Endothelial cell of umbilical vein (primary cell): ENCODE measurements at regions of chr20 and their contacts with region 1.

Region 1: GRCh38 chr20:40915756-40916155 is 112.9 kb upstream of the TOP1 start:
- DNase-seq: no peak
- H3K4me3 ChIP-seq: no peak overlapping the region
- H3K27ac ChIP-seq: no peak overlapping the region
- H3K4me1 ChIP-seq: no peaks in the 10 kb centered on the region
- H3K27me3 ChIP-seq: no peaks in the 10 kb centered on the region
- CTCF ChIP-seq: no peak
- POLR2A ChIP-seq: no peak

Region 2: GRCh38 chr20:40802886-40803285 is 112.9 kb before region 1 on chr20:
- CTCF ChIA-PET with region 1: no interaction called
- POLR2A ChIA-PET with region 1: no interaction called
- dilution Hi-C with region 1: no loop called
- intact Hi-C with region 1: loop called (anchors 5 kb)
- DNase-seq: no peak
- H3K4me3 ChIP-seq: no peak overlapping the region
- H3K27ac ChIP-seq: no peak overlapping the region
- H3K4me1 ChIP-seq: no peaks in the 10 kb centered on the region
- H3K27me3 ChIP-seq: no peaks in the 10 kb centered on the region
- CTCF ChIP-seq: no peak
- POLR2A ChIP-seq: no peak

Region 3: DNA sequence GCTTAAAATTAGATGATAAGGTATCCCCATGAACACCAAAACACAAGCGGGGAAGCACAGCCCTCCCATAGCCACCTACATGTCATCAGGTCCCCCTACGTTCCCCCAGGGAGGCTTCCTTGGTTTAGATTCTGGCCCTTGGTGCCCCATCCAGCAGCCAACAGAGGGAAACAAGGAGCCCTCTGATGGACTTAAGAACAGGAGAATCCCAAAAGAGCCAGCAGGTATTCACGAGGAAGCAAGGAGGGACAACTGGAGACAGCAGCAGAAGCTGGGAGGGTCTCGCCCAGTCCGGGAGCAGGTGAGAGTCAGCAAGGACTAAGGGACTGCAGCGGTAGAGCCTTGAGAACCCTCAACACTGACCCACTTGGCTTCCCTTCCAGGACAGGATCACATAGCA is 54.4 kb after region 1 on chr20:
- CTCF ChIA-PET with region 1: no interaction called
- POLR2A ChIA-PET with region 1: no interaction called
- dilution Hi-C with region 1: no loop called
- intact Hi-C with region 1: no loop called
- DNase-seq: no peak
- H3K4me3 ChIP-seq: no peak overlapping the region
- H3K27ac ChIP-seq: no peak overlapping the region
- H3K4me1 ChIP-seq: no peaks in the 10 kb centered on the region
- H3K27me3 ChIP-seq: no peaks in the 10 kb centered on the region
- CTCF ChIP-seq: peak in 1 of 2 donors; percentile 16
- POLR2A ChIP-seq: no peak

Region 4: GRCh38 chr20:41213150-41213820 is 297.5 kb after region 1 on chr20:
- CTCF ChIA-PET with region 1: no interaction called
- POLR2A ChIA-PET with region 1: no interaction called
- dilution Hi-C with region 1: no loop called
- intact Hi-C with region 1: no loop called
- DNase-seq: peak; percentile 22
- H3K4me3 ChIP-seq: no peak overlapping the region
- H3K27ac ChIP-seq: no peak overlapping the region
- H3K4me1 ChIP-seq: peaks cover 3% of the 10 kb centered on the region
- H3K27me3 ChIP-seq: no peaks in the 10 kb centered on the region
- CTCF ChIP-seq: no peak
- POLR2A ChIP-seq: no peak